ENCODE measurements at regions of chr16 and their contacts with region 1.

Region 1: GRCh38 chr16:77437859-77438258 is 3.0 kb upstream of the ADAMTS18 start:
- DNase-seq: peak; percentile 73
- H3K4me3 ChIP-seq: no peak overlapping the region
- H3K27ac ChIP-seq: no peak overlapping the region
- H3K4me1 ChIP-seq: peaks cover 24% of the 10 kb centered on the region
- H3K27me3 ChIP-seq: peaks cover 0 to 3% of the 10 kb centered on the region in 2 experiments
- CTCF ChIP-seq: peak; percentile 27 to 49
- POLR2A ChIP-seq: no peak

Region 2: GRCh38 chr16:77457046-77457445 is 19.2 kb after region 1 on chr16:
- CTCF ChIA-PET with region 1: interaction called, 14 read pairs
- POLR2A ChIA-PET with region 1: no interaction called
- dilution Hi-C with region 1: no loop called
- intact Hi-C with region 1: no loop called
- DNase-seq: peak; percentile 93
- H3K4me3 ChIP-seq: peak overlapping the region in 1 of 3 experiments; percentile 60
- H3K27ac ChIP-seq: peak overlapping the region; percentile 95
- H3K4me1 ChIP-seq: peaks cover 19% of the 10 kb centered on the region
- H3K27me3 ChIP-seq: no peaks in the 10 kb centered on the region
- CTCF ChIP-seq: no peak
- POLR2A ChIP-seq: no peak

Region 3: GRCh38 chr16:77569406-77569805 is 131.5 kb after region 1 on chr16:
- CTCF ChIA-PET with region 1: interaction called, 27 read pairs
- POLR2A ChIA-PET with region 1: no interaction called
- dilution Hi-C with region 1: no loop called
- intact Hi-C with region 1: no loop called
- DNase-seq: peak; percentile 85
- H3K4me3 ChIP-seq: no peak overlapping the region
- H3K27ac ChIP-seq: peak overlapping the region; percentile 83
- H3K4me1 ChIP-seq: peaks cover 49% of the 10 kb centered on the region
- H3K27me3 ChIP-seq: no peaks in the 10 kb centered on the region
- CTCF ChIP-seq: no peak
- POLR2A ChIP-seq: no peak

Region 4: GRCh38 chr16:77574867-77575624 is 137.2 kb after region 1 on chr16:
- CTCF ChIA-PET with region 1: interaction called, 27 read pairs
- POLR2A ChIA-PET with region 1: no interaction called
- dilution Hi-C with region 1: no loop called
- intact Hi-C with region 1: no loop called
- DNase-seq: peak; percentile 98
- H3K4me3 ChIP-seq: no peak overlapping the region
- H3K27ac ChIP-seq: peak overlapping the region; percentile 95
- H3K4me1 ChIP-seq: peaks cover 49% of the 10 kb centered on the region
- H3K27me3 ChIP-seq: no peaks in the 10 kb centered on the region
- CTCF ChIP-seq: no peak
- POLR2A ChIP-seq: peak; percentile 52

Region 5: GRCh38 chr16:77591347-77591746 is 153.5 kb after region 1 on chr16:
- CTCF ChIA-PET with region 1: interaction called, 366 read pairs
- POLR2A ChIA-PET with region 1: interaction called, 13 read pairs
- dilution Hi-C with region 1: no loop called
- intact Hi-C with region 1: no loop called
- DNase-seq: peak; percentile 89
- H3K4me3 ChIP-seq: no peak overlapping the region
- H3K27ac ChIP-seq: peak overlapping the region; percentile 98
- H3K4me1 ChIP-seq: peaks cover 78% of the 10 kb centered on the region
- H3K27me3 ChIP-seq: no peaks in the 10 kb centered on the region
- CTCF ChIP-seq: no peak
- POLR2A ChIP-seq: no peak

Region 6: GRCh38 chr16:77660311-77660710 is 222.5 kb after region 1 on chr16:
- CTCF ChIA-PET with region 1: interaction called, 48 read pairs
- POLR2A ChIA-PET with region 1: no interaction called
- dilution Hi-C with region 1: no loop called
- intact Hi-C with region 1: loop called (anchors 1 kb)
- DNase-seq: peak; percentile 81
- H3K4me3 ChIP-seq: no peak overlapping the region
- H3K27ac ChIP-seq: peak overlapping the region; percentile 40
- H3K4me1 ChIP-seq: peaks cover 10% of the 10 kb centered on the region
- H3K27me3 ChIP-seq: no peaks in the 10 kb centered on the region
- CTCF ChIP-seq: peak; percentile 65 to 68
- POLR2A ChIP-seq: no peak

Region 7: DNA sequence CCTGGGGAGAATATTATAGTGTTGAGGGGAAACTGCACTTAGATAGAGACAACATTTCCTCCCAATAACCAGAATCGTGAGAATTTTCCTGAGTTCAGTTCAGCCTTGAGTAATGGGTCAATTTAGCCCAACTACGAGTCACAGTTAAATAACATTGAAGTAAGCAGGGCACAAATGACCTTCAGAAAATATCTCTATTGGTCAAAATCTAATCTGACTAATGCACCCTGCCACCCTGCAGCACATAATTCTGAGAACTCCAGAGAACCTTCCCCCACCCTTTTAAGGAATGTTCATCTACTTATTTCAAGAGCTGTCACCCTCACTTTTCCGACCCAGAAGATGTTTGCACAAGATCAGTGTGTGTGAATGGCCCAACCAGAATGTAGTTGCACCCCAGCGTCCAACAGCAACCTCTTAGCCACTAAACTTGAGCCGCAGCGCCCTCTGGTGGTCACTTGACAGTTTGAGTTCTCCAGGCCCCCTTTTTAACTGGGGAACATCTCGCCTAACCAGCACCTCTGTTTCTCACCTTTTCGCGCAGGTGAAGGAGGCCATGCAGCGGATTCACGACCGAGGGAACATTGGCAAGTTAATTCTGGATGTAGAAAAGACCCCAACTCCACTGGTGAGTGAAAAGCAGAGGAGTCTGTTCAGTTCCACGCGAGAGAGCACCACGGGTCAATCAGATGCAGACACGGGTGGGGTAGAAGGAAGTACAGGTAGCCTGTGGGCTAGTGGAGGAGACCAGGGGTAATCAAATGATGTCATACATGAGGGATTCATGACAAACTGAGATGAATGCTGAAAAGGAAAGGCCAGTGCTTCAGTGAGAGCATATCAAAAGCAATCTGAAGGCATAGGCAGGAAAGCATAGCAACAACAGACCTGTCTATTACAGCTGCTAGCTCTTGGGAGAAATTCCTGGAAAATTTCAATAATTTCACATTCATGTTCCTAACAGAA is 533.7 kb after region 1 on chr16:
- CTCF ChIA-PET with region 1: interaction called, 8 read pairs
- POLR2A ChIA-PET with region 1: no interaction called
- dilution Hi-C with region 1: no loop called
- intact Hi-C with region 1: loop called (anchors 2 kb)
- DNase-seq: peak; percentile 52
- H3K4me3 ChIP-seq: no peak overlapping the region
- H3K27ac ChIP-seq: no peak overlapping the region
- H3K4me1 ChIP-seq: no peaks in the 10 kb centered on the region
- H3K27me3 ChIP-seq: no peaks in the 10 kb centered on the region
- CTCF ChIP-seq: peak; percentile 73 to 81
- POLR2A ChIP-seq: no peak